Psoas muscle (tissue), 8 donors: ENCODE measurements at regions of chr2 and their contacts with region 1.

Region 1: DNA sequence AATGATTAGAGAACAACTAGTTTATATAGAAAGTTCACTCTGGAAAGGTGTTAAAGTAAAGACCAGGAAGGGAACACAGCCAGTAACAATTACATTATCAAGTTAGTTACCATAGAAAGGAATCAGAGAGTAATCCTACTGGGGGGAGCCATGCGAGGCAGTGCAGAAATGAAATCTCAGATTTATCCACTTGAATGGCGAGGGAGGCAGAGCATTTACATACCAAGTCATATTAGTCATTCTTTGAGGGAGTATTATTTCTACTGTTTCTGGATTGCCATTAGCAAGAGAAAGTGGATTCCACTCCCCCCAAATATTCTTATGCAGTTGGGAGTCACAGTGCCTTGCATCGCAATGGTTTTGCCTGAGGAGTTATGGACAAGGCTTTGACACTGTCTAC is 472.7 kb upstream of the TRIB2 start:
- DNase-seq: no peak
- ATAC-seq: no peak
- H3K4me3 ChIP-seq: no peak overlapping the region
- H3K27ac ChIP-seq: no peak overlapping the region
- H3K4me1 ChIP-seq: no peaks in the 10 kb centered on the region
- H3K27me3 ChIP-seq: no peaks in the 10 kb centered on the region
- CTCF ChIP-seq: no peak

Region 2: GRCh38 chr2:12265646-12266045 is 21.6 kb after region 1 on chr2:
- intact Hi-C with region 1: loop called in 1 of 2 experiments (anchors 1 kb)
- DNase-seq: no peak
- ATAC-seq: no peak
- H3K4me3 ChIP-seq: no peak overlapping the region
- H3K27ac ChIP-seq: no peak overlapping the region
- H3K4me1 ChIP-seq: peaks cover 12% of the 10 kb centered on the region
- H3K27me3 ChIP-seq: no peaks in the 10 kb centered on the region
- CTCF ChIP-seq: no peak